MCF 10A (cell line): ENCODE measurements at regions of chr17 and their contacts with region 1.

Region 1: GRCh38 chr17:1908699-1909309 is 79.0 kb downstream of the RPA1 start:
- DNase-seq: peak; percentile 81
- H3K4me3 Mint-ChIP-seq: no peak overlapping the region
- H3K27ac Mint-ChIP-seq: no peak overlapping the region
- H3K4me1 Mint-ChIP-seq: no peaks in the 10 kb centered on the region
- H3K27me3 Mint-ChIP-seq: peaks cover 26% of the 10 kb centered on the region
- CTCF ChIP-seq: peak; percentile 73

Region 2: GRCh38 chr17:1658100-1658499 is 250.7 kb before region 1 on chr17:
- CTCF ChIA-PET with region 1: no interaction called
- POLR2A ChIA-PET with region 1: no interaction called
- intact Hi-C with region 1: no loop called
- DNase-seq: no peak
- H3K4me3 Mint-ChIP-seq: no peak overlapping the region
- H3K27ac Mint-ChIP-seq: no peak overlapping the region
- H3K4me1 Mint-ChIP-seq: no peaks in the 10 kb centered on the region
- H3K27me3 Mint-ChIP-seq: no peaks in the 10 kb centered on the region
- CTCF ChIP-seq: no peak

Region 3: GRCh38 chr17:1834380-1835149 is 74.2 kb before region 1 on chr17:
- CTCF ChIA-PET with region 1: no interaction called
- POLR2A ChIA-PET with region 1: no interaction called
- intact Hi-C with region 1: no loop called
- DNase-seq: no peak
- H3K4me3 Mint-ChIP-seq: no peak overlapping the region
- H3K27ac Mint-ChIP-seq: no peak overlapping the region
- H3K4me1 Mint-ChIP-seq: peaks cover 18% of the 10 kb centered on the region
- H3K27me3 Mint-ChIP-seq: no peaks in the 10 kb centered on the region
- CTCF ChIP-seq: no peak

Region 4: DNA sequence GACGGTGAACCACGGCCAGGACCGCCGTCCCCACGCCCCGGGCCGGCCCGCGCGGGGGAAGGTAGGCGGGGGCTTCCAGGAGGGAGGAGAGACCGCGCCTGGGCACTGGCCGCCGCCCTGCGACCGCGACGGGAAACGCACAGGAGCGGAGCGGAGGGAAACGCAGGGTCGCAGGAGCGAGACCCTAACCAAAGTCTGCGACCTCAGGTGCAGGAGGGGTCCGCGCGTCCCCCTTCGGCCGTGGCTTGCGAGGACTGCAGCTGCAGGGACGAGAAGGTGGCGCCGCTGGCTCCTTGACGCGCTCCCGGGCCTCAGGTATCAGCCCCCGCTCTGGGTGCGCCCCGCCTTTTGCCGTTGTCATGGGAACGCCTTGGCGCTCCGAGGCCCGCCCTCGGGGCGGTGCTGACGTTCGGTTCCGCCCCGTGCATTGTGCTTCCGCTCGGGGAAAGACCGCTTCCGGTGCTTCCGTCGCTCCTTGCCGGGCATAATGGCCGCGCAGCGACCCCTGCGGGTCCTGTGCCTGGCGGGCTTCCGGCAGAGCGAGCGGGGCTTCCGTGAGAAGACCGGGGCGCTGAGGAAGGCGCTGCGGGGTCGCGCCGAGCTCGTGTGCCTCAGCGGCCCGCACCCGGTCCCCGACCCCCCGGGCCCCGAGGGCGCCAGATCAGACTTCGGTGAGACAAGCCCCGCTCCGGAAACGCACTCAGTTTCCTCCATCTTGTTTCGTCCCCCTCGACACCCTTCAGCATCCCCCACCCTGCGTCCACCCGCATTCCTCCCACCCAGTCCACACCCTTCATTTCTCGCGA is 133.0 kb after region 1 on chr17 and contains the start of gene OVCA2:
- CTCF ChIA-PET with region 1: interaction called, 17 read pairs
- POLR2A ChIA-PET with region 1: interaction called, 6 read pairs
- intact Hi-C with region 1: no loop called
- DNase-seq: peak; percentile 95
- H3K4me3 Mint-ChIP-seq: peak within 1 kb of the TSS; percentile 99
- H3K27ac Mint-ChIP-seq: peak within 1 kb of the TSS; percentile 98
- H3K4me1 Mint-ChIP-seq: peaks cover 15% of the 10 kb centered on the region
- H3K27me3 Mint-ChIP-seq: no peaks in the 10 kb centered on the region
- CTCF ChIP-seq: peak; percentile 18
- total RNA-seq, gene OVCA2: 28.8 and 33.5 TPM in 2 replicates